A549 (cell line): ENCODE measurements at regions of chr20 and their contacts with region 1.

Region 1: GRCh38 chr20:59495894-59496510 is 108.3 kb upstream of the PHACTR3 start:
- DNase-seq: peak; percentile 67 to 71
- ATAC-seq: peak; percentile 91 to 95
- H3K4me3 ChIP-seq: no peak overlapping the region
- H3K27ac ChIP-seq: no peak overlapping the region
- H3K4me1 ChIP-seq: no peaks in the 10 kb centered on the region
- CTCF ChIP-seq: peak; percentile 85
- EP300 ChIP-seq: no peak
- POLR2A ChIP-seq: no peak
- RAD21 ChIP-seq: peak; percentile 70 to 74

Region 2: DNA sequence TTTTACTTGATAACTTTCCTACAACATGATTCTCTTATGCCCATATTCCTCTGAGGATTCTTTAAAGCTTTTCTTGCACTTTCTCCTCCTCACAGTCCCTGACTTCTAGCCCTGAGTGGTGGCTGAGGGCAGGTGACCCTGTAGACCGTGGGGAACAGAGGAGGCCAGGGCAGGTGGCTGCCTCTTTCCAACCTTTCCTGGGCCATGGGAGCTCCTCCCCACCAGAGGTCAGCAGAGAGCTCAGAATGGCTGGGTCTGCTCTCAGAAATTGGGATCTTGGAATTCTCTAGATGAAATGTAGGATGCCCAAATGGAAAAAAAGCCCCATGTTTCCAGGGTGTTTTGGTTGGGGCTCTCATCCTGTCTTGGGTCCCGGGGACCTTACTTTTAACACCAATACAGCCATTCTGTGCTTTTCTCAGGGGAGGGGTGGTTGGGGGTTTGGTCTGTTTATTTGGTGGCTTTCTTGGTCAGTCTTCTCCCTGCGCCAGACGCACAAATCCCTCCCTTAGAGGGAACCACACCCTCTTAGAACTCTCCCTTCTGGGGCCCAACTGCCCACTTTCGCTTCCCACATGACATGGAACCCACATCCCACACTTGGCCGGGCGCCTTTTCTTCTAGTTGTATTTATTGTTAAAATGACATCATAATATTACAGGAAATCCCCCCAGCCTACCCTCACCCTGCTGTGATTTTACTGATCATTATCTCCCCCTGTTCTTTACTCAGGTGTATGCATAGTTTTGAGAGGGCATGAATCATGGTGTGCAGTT is 625.6 kb before region 1 on chr20:
- CTCF ChIA-PET with region 1: interaction called, 31 read pairs
- POLR2A ChIA-PET with region 1: no interaction called
- DNase-seq: peak; percentile 63 to 78
- ATAC-seq: peak; percentile 93 to 98
- H3K4me3 ChIP-seq: no peak overlapping the region
- H3K27ac ChIP-seq: no peak overlapping the region
- H3K4me1 ChIP-seq: no peaks in the 10 kb centered on the region
- CTCF ChIP-seq: peak; percentile 85
- EP300 ChIP-seq: no peak
- POLR2A ChIP-seq: no peak
- RAD21 ChIP-seq: peak; percentile 88 to 89

Region 3: GRCh38 chr20:59441860-59442845 is 53.8 kb before region 1 on chr20:
- CTCF ChIA-PET with region 1: interaction called, 14 read pairs
- POLR2A ChIA-PET with region 1: no interaction called
- DNase-seq: no peak
- ATAC-seq: no peak
- H3K4me3 ChIP-seq: no peak overlapping the region
- H3K27ac ChIP-seq: no peak overlapping the region
- H3K4me1 ChIP-seq: no peaks in the 10 kb centered on the region
- CTCF ChIP-seq: no peak
- EP300 ChIP-seq: no peak
- POLR2A ChIP-seq: no peak
- RAD21 ChIP-seq: no peak

Region 4: DNA sequence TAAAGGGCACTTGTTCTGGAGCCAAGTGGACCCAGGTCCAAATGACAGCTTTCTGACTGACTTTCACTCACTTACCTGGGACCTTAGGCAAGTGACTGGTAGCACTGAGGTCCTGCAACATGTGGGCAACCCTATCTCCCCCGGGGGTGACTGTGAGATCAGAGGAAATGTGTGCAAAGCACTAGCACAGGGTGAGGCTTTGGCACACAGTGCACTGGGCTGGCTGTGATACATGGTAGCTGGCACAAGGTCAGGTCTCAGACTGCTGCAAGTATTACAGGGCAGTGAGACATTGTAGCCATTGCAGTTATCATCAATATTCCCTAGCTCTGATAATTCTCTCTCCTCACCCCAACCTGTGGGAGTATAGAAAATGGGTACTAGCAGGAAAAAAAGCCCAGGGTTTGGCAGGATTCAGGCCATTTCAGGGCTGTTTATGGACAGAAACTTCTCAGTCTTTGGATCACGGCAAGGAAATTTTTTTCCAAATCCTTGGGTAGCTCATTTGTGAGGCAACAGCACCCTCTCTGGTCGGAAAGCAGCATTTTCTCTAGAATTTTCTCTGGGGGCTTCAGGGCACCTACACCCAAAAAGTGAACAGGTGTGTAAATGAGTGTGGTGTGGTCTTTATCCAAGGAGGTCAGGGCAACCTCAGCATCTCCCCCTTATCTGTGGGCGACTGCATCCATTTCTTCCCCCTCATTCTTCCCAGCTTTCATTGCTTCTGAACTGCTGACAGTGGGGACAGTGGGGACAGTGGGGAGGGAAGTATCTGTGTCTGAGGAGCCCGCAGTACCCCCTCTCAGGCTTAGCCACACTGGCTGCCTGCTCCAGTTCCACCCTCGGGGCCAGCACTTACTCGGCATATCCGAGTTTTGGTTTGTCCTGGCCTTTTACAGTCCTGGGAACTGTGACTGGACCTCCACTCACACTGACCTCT is 40.3 kb before region 1 on chr20:
- CTCF ChIA-PET with region 1: interaction called, 14 read pairs
- POLR2A ChIA-PET with region 1: no interaction called
- DNase-seq: peak; percentile 33
- ATAC-seq: peak; percentile 64 to 81; a peak in 5 of 6 replicates
- H3K4me3 ChIP-seq: no peak overlapping the region
- H3K27ac ChIP-seq: no peak overlapping the region
- H3K4me1 ChIP-seq: no peaks in the 10 kb centered on the region
- CTCF ChIP-seq: peak; percentile 84
- EP300 ChIP-seq: no peak
- POLR2A ChIP-seq: no peak
- RAD21 ChIP-seq: peak; percentile 87 to 89

Region 5: GRCh38 chr20:59485576-59486454 is 10.2 kb before region 1 on chr20:
- CTCF ChIA-PET with region 1: interaction called, 19 read pairs
- POLR2A ChIA-PET with region 1: no interaction called
- DNase-seq: no peak
- ATAC-seq: no peak
- H3K4me3 ChIP-seq: no peak overlapping the region
- H3K27ac ChIP-seq: no peak overlapping the region
- H3K4me1 ChIP-seq: no peaks in the 10 kb centered on the region
- CTCF ChIP-seq: no peak
- EP300 ChIP-seq: no peak
- POLR2A ChIP-seq: no peak
- RAD21 ChIP-seq: no peak

Region 6: DNA sequence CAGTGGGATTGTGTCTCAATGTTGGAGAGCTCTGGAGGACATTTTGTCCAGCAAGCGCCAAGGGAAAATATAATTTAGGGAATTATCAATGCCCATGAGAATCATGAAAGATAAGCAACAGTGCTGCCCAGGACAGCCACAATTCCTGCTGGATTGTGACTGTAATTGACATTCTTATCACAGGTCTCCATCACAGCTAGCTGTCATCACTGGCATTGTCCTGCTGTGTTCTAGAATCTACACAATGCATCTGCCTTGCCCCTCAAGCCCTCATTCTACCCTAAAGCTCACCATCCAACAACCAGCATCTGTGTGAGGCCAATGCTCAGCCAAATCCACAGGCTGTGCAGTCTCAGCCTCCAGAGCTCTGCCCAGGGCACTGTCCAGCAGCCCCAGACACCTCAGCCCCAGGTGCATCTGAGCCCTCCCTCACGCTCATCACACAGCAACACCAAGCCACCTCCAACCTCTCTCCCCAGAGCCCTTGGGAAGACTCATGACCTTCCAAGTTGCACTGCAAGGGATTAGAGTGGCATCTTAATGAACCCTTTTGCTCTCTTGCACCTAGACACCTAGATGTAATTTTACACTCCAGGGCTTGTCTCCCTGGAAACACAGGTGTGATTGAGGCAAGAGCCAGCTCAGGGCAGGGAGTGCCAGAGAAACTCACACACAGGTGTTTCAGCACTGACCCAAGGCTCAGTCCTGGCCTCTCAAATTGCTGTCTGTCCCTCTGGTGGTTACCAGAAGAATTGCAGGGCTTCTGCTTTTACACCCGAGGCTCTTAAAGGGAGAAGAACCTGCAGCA is 23.1 kb after region 1 on chr20:
- CTCF ChIA-PET with region 1: interaction called, 20 read pairs
- POLR2A ChIA-PET with region 1: no interaction called
- DNase-seq: peak; percentile 65 to 84
- ATAC-seq: peak; percentile 84 to 88
- H3K4me3 ChIP-seq: no peak overlapping the region
- H3K27ac ChIP-seq: no peak overlapping the region
- H3K4me1 ChIP-seq: no peaks in the 10 kb centered on the region
- CTCF ChIP-seq: peak; percentile 44
- EP300 ChIP-seq: no peak
- POLR2A ChIP-seq: no peak
- RAD21 ChIP-seq: no peak